Breast epithelium (tissue), 4 donors: ENCODE measurements at regions of chr7 and their contacts with region 1.

Region 1: DNA sequence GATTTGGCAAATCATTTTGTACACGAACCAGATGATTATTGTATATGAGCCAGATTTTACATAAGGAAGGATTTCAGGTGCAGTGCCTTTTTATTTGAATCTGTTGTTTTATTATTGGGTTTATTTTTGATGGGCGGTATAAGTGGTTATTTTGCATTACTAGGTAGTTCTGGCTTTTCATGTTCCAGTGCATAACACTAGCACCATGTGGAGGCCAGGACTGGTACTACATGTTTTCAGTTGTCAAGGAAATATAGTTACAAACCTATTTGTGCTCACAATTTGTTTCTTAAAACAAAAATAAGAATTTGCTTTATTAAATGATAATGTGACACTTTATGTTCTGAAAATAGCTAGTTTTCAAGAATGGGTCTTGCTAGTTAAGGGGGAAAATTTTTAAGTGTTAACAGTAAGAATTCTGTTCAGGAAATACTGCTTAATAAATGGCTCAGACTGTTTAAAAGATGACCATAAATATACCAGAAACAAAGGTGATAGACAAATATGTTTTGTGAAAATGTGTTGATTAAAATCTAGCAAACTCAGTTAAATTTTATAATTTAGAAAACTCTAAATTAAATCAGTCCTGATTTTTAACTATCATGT is 7.1 kb upstream of the SEMA3E start:
- DNase-seq: no peak
- H3K4me3 ChIP-seq: no peak overlapping the region
- H3K27ac ChIP-seq: no peak overlapping the region
- H3K4me1 ChIP-seq: no peaks in the 10 kb centered on the region
- H3K27me3 ChIP-seq: no peaks in the 10 kb centered on the region
- CTCF ChIP-seq: peak; percentile 57 to 81 (median 74)
- POLR2A ChIP-seq: no peak

Region 2: DNA sequence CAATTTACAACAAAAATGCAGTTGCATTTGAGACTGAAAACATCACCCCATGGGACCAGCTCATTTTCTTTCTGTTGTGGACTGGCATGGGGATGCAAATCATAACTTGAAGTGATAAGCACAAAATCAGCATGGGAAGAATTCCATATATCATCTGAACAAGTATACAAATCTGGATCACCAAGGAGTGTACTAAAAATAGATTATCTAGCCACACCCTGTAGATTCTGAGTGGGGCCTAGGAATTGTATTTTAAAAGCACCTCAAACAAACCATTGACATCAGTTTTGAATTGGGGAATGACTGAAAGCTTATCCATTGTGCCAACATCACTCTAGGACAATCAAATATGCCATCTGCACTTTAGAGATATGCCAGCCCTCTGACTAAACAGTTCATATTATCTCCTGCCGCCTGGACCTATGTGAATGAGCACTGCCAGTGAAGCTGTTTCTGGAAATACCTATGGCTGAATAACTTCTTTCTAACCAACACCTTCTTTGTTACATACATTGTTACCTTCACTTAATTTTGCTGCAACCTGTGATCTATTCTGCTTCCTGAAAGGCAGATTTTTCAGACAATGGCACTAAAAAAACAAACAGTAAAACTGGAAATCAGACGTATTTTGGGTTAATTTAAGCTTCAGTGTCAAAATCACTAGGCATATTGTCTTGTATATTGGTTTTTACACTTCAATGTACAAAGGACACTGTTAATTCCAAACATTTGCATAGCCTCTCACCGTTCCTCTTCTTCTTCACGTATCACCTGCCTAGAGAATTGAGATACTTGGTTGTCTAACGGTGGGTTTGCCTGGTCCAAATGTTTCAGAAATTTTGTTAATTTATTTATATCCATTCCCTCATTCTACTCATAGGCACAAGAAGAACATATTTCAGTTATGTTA is 1843.8 kb before region 1 on chr7:
- intact Hi-C with region 1: no loop called
- DNase-seq: no peak
- H3K4me3 ChIP-seq: no peak overlapping the region
- H3K27ac ChIP-seq: no peak overlapping the region
- H3K4me1 ChIP-seq: no peaks in the 10 kb centered on the region
- H3K27me3 ChIP-seq: no peaks in the 10 kb centered on the region
- CTCF ChIP-seq: no peak
- POLR2A ChIP-seq: no peak

Region 3: DNA sequence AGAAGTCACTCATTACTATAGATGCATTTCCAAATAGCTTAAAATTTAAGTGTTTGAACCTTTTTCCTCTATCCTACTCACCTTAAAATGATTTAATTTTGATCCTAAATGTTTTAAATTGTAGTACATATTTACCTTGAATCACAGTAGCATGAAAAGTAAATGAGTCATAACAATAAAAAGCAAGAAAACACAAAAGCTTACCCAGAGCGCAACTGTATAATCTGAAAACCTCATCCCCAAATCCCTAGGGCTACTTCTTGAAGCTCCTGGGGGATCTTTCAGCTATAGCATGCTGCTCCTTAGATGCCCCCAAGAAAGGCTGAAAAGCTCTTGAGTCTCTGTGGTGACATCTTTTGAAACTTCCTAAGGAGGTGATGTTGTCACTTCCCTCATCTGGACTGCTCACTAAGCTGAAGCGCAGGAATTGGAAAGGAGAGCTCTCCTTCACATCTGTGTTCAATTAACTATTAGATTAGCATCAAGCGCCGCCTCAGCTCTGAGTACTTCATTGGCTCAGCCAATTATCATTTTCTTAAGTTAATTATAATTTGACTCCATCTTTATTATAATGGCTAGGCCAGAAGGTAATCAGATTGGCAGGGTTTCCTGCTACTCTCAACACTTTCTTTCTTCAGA is 67.3 kb before region 1 on chr7:
- intact Hi-C with region 1: loop called (anchors 2 kb)
- DNase-seq: no peak
- H3K4me3 ChIP-seq: no peak overlapping the region
- H3K27ac ChIP-seq: no peak overlapping the region
- H3K4me1 ChIP-seq: no peaks in the 10 kb centered on the region
- H3K27me3 ChIP-seq: no peaks in the 10 kb centered on the region
- CTCF ChIP-seq: no peak
- POLR2A ChIP-seq: no peak

Region 4: DNA sequence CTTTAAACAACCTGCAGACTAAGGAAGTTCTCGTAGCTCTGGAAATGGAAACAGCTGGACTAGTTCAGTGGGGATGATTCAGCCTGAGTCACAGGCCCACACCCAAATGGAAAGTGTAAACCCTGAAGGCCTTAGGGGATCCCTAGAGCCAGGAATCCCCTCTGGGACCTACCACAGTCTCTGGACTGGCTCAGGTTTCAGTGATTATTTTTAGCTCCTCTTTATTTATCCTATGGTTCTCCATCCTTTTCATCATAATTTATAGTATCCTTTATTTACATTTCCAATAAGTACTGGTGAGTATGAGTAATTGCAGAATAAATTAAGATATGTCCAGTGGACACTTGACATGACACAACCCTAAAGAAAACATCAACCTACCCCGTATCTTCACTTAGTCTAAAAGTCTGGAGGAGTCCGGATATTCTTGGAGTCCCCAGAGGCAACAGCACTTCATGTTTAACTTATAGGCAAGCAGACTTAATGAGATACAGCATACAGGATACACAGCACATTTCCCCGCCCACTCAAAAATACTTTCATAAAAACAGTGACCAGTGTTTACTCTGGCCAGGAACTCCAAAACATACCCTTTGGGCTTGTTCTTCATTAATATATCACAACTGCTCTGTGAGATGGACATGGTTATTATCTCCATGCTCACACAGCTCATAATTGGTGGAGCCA is 21.3 kb after region 1 on chr7:
- intact Hi-C with region 1: loop called (anchors 2 kb)
- DNase-seq: no peak
- H3K4me3 ChIP-seq: no peak overlapping the region
- H3K27ac ChIP-seq: no peak overlapping the region
- H3K4me1 ChIP-seq: no peaks in the 10 kb centered on the region
- H3K27me3 ChIP-seq: no peaks in the 10 kb centered on the region
- CTCF ChIP-seq: no peak
- POLR2A ChIP-seq: no peak